A673 (cell line): ENCODE measurements at regions of chr17 and their contacts with region 1.

Region 1: GRCh38 chr17:1365445-1366039 is 34.5 kb downstream of the YWHAE start:
- DNase-seq: peak; percentile 91
- H3K4me3 ChIP-seq: no peak overlapping the region
- H3K27ac ChIP-seq: no peak overlapping the region
- H3K4me1 ChIP-seq: peaks cover 26% of the 10 kb centered on the region
- H3K27me3 ChIP-seq: no peaks in the 10 kb centered on the region
- CTCF ChIP-seq: peak; percentile 91

Region 2: DNA sequence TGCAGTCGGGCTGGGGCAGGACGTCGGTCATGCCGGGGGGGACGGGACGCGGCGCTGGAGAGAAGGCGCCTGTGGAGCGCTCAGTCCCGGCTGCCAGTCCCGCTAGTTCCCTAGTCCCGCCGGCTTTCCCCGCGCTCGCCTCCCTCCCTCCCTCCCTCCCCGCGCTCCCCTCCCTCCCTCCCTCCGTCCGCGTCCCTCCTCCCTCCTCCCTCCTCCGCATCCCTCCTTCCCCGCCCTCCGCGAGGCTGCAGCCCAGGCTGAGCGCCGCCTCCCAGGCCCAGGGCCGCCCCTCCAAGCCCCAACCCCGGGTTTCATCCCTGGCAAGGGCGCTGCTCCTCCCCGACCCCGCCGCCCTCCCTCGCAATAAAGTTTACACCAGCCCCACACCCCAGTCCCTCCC is 333.8 kb before region 1 on chr17:
- CTCF ChIA-PET with region 1: no interaction called
- POLR2A ChIA-PET with region 1: no interaction called
- intact Hi-C with region 1: no loop called
- DNase-seq: peak; percentile 81
- H3K4me3 ChIP-seq: no peak overlapping the region
- H3K27ac ChIP-seq: no peak overlapping the region
- H3K4me1 ChIP-seq: no peaks in the 10 kb centered on the region
- H3K27me3 ChIP-seq: no peaks in the 10 kb centered on the region
- CTCF ChIP-seq: no peak

Region 3: DNA sequence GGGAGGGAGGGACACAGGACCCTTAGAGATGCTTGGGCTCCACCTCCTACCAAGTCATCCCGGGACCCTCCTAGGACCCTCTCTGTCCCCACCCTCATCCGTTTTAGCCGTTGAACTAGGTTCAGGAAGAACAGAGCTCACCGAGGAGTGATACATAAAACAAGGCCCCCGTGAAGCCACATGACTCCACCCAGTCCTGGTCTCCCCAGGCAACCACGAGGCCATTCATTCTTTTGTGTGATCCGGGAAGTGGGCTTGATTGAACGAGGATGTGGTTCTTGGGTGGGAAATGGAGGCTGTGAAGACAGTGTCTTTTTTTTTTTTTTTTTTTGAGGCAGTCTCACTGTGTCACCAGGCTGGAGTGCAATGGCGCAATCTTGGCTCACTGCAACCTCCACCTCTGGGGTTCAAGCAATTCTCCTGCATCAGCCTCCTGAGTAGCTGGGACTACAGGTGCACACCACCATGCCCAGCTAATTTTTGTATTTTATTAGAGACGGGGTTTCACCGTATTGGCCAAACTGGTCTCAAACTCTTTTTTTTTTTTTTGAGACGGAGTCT is 71.3 kb before region 1 on chr17:
- CTCF ChIA-PET with region 1: no interaction called
- POLR2A ChIA-PET with region 1: no interaction called
- intact Hi-C with region 1: no loop called
- DNase-seq: no peak
- H3K4me3 ChIP-seq: no peak overlapping the region
- H3K27ac ChIP-seq: no peak overlapping the region
- H3K4me1 ChIP-seq: no peaks in the 10 kb centered on the region
- H3K27me3 ChIP-seq: no peaks in the 10 kb centered on the region
- CTCF ChIP-seq: no peak

Region 4: GRCh38 chr17:1379930-1380313 is 14.4 kb after region 1 on chr17:
- CTCF ChIA-PET with region 1: interaction called, 11 read pairs
- POLR2A ChIA-PET with region 1: no interaction called
- intact Hi-C with region 1: no loop called
- DNase-seq: no peak
- H3K4me3 ChIP-seq: no peak overlapping the region
- H3K27ac ChIP-seq: no peak overlapping the region
- H3K4me1 ChIP-seq: peaks cover 60% of the 10 kb centered on the region
- H3K27me3 ChIP-seq: no peaks in the 10 kb centered on the region
- CTCF ChIP-seq: no peak

Region 5: GRCh38 chr17:1455797-1456599 is 90.5 kb after region 1 on chr17 and contains the start of gene CRK:
- CTCF ChIA-PET with region 1: no interaction called
- POLR2A ChIA-PET with region 1: no interaction called
- intact Hi-C with region 1: loop called (anchors 10 kb)
- DNase-seq: peak; percentile 98
- H3K4me3 ChIP-seq: peak within 1 kb of the TSS; percentile 100
- H3K27ac ChIP-seq: peak within 1 kb of the TSS; percentile 99
- H3K4me1 ChIP-seq: peaks cover 6% of the 10 kb centered on the region
- H3K27me3 ChIP-seq: no peaks in the 10 kb centered on the region
- CTCF ChIP-seq: peak; percentile 10; the same call in 1 of the 2 replicates
- total RNA-seq, gene CRK: 85.9 and 86.5 TPM in 2 replicates

Region 6: GRCh38 chr17:1532836-1533602 is 167.5 kb after region 1 on chr17:
- CTCF ChIA-PET with region 1: interaction called, 12 read pairs
- POLR2A ChIA-PET with region 1: no interaction called
- intact Hi-C with region 1: no loop called
- DNase-seq: peak; percentile 49
- H3K4me3 ChIP-seq: no peak overlapping the region
- H3K27ac ChIP-seq: no peak overlapping the region
- H3K4me1 ChIP-seq: no peaks in the 10 kb centered on the region
- H3K27me3 ChIP-seq: no peaks in the 10 kb centered on the region
- CTCF ChIP-seq: peak; percentile 59